Gastrocnemius medialis (tissue), 4 donors: ENCODE measurements at regions of chr16 and their contacts with region 1.

Region 1: GRCh38 chr16:58249780-58250478 is 44.9 kb downstream of the PRSS54 start:
- DNase-seq: peak; percentile 51 to 76
- ATAC-seq: peak; percentile 96 to 98
- H3K4me3 ChIP-seq: peak overlapping the region; percentile 73 to 89 (median 76)
- H3K27ac ChIP-seq: peak overlapping the region; percentile 63 to 77 (median 73)
- H3K4me1 ChIP-seq: peaks cover 0 to 10% of the 10 kb centered on the region in 2 donors
- H3K27me3 ChIP-seq: no peaks in the 10 kb centered on the region
- CTCF ChIP-seq: peak in 1 of 5 experiments; percentile 8
- POLR2A ChIP-seq: peak in 1 of 2 donors; percentile 22

Region 2: GRCh38 chr16:58025351-58026138 is 224.4 kb before region 1 on chr16 and contains the start of gene MMP15:
- in situ Hi-C with region 1: no loop called
- intact Hi-C with region 1: loop called (anchors 5 kb)
- DNase-seq: peak; percentile 36 to 63
- ATAC-seq: peak; percentile 64 to 70
- H3K4me3 ChIP-seq: peak within 1 kb of the TSS; percentile 66 to 99 (median 70)
- H3K27ac ChIP-seq: peak within 1 kb of the TSS; percentile 73 to 92 (median 91)
- H3K4me1 ChIP-seq: peaks cover 25 to 42% of the 10 kb centered on the region in 2 donors
- H3K27me3 ChIP-seq: no peaks in the 10 kb centered on the region
- CTCF ChIP-seq: no peak
- POLR2A ChIP-seq: peak; percentile 63 to 76
- total RNA-seq, gene MMP15: 2.9 to 8.1 (median 4.9) TPM

Region 3: GRCh38 chr16:58129097-58129936 is 120.6 kb before region 1 on chr16 and contains the start of gene CFAP20:
- in situ Hi-C with region 1: no loop called
- intact Hi-C with region 1: loop called (anchors 5 kb)
- DNase-seq: peak; percentile 99
- ATAC-seq: peak; percentile 99 to 100
- H3K4me3 ChIP-seq: peak within 1 kb of the TSS; percentile 84 to 92 (median 88)
- H3K27ac ChIP-seq: peak within 1 kb of the TSS; percentile 86 to 91 (median 90)
- H3K4me1 ChIP-seq: peaks cover 25 to 31% of the 10 kb centered on the region in 2 donors
- H3K27me3 ChIP-seq: no peaks in the 10 kb centered on the region
- CTCF ChIP-seq: peak in 2 of 5 experiments; percentile 15 to 16
- POLR2A ChIP-seq: peak; percentile 83 to 96
- total RNA-seq, gene CFAP20: 6.5 to 16.0 (median 9.1) TPM

Region 4: GRCh38 chr16:58198022-58198683 is 51.8 kb before region 1 on chr16 and contains the start of gene CSNK2A2:
- in situ Hi-C with region 1: no loop called
- intact Hi-C with region 1: loop called (anchors 2 kb)
- DNase-seq: peak; percentile 25 to 52
- ATAC-seq: peak; percentile 91 to 92
- H3K4me3 ChIP-seq: peak within 1 kb of the TSS; percentile 67 to 85 (median 78)
- H3K27ac ChIP-seq: peak within 1 kb of the TSS in 3 of 4 donors; percentile 59 to 65 (median 61)
- H3K4me1 ChIP-seq: peaks cover 9% of the 10 kb centered on the region in 2 donors
- H3K27me3 ChIP-seq: no peaks in the 10 kb centered on the region
- CTCF ChIP-seq: peak in 4 of 5 experiments; percentile 30 to 56 (median 42)
- POLR2A ChIP-seq: peak; percentile 27 to 33
- total RNA-seq, gene CSNK2A2: 14.0 to 29.5 (median 20.4) TPM

Region 5: GRCh38 chr16:58629572-58630104 is 379.7 kb after region 1 on chr16 and contains the start of gene CNOT1:
- in situ Hi-C with region 1: loop called in 1 of 4 experiments (anchors 25 kb)
- intact Hi-C with region 1: no loop called
- DNase-seq: peak; percentile 99 to 100
- ATAC-seq: peak; percentile 92 to 96
- H3K4me3 ChIP-seq: peak within 1 kb of the TSS; percentile 85 to 92 (median 88)
- H3K27ac ChIP-seq: peak within 1 kb of the TSS; percentile 94 to 99 (median 96)
- H3K4me1 ChIP-seq: peaks cover 21 to 35% of the 10 kb centered on the region in 2 donors
- H3K27me3 ChIP-seq: no peaks in the 10 kb centered on the region
- CTCF ChIP-seq: peak in 1 of 5 experiments; percentile 15
- POLR2A ChIP-seq: peak; percentile 87 to 89
- total RNA-seq, gene CNOT1: 54.7 to 119 (median 87.2) TPM